Activated CD4-positive, alpha-beta memory T cell treated with anti-CD3 and anti-CD28 coated beads for 36 hours (primary cell): ENCODE measurements at regions of chr9 and their contacts with region 1.

Region 1: GRCh38 chr9:77456829-77457437 is 191.2 kb downstream of the GNA14 start:
- DNase-seq: peak; percentile 91
- H3K4me3 Mint-ChIP-seq: no peak overlapping the region
- H3K27ac Mint-ChIP-seq: no peak overlapping the region
- H3K4me1 Mint-ChIP-seq: peaks cover 13% of the 10 kb centered on the region
- H3K27me3 Mint-ChIP-seq: no peaks in the 10 kb centered on the region

Region 2: GRCh38 chr9:77163884-77164283 is 293.0 kb before region 1 on chr9:
- CTCF ChIA-PET with region 1: interaction called, 18 read pairs
- POLR2A ChIA-PET with region 1: no interaction called
- intact Hi-C with region 1: no loop called
- DNase-seq: no peak
- H3K4me3 Mint-ChIP-seq: no peak overlapping the region
- H3K27ac Mint-ChIP-seq: no peak overlapping the region
- H3K4me1 Mint-ChIP-seq: no peaks in the 10 kb centered on the region
- H3K27me3 Mint-ChIP-seq: peaks cover 8% of the 10 kb centered on the region

Region 3: DNA sequence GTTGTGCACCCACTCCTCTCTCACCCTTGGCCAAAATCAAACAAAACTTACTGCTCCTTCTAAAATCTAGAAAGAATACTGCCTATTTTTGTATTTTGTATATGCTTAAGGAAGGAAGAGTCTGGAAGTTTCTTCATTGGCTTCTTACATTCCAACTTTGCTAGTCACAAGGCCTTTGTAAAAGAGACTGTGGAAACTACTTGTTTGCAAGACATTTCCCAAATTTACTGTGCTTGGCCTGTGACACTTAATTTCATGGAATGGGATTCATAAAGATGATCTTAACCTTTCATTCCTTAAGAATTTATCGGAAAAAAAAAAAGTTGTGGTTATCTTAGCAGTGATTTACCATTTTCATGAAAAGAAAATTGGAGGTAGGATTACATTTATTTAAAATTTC is 70.7 kb before region 1 on chr9:
- CTCF ChIA-PET with region 1: no interaction called
- POLR2A ChIA-PET with region 1: no interaction called
- intact Hi-C with region 1: no loop called
- DNase-seq: no peak
- H3K4me3 Mint-ChIP-seq: no peak overlapping the region
- H3K27ac Mint-ChIP-seq: no peak overlapping the region
- H3K4me1 Mint-ChIP-seq: peaks cover 2% of the 10 kb centered on the region
- H3K27me3 Mint-ChIP-seq: no peaks in the 10 kb centered on the region

Region 4: GRCh38 chr9:77433675-77434445 is 23.1 kb before region 1 on chr9:
- CTCF ChIA-PET with region 1: interaction called, 42 read pairs
- POLR2A ChIA-PET with region 1: no interaction called
- intact Hi-C with region 1: loop called (anchors 1 kb)
- DNase-seq: peak; percentile 65
- H3K4me3 Mint-ChIP-seq: no peak overlapping the region
- H3K27ac Mint-ChIP-seq: no peak overlapping the region
- H3K4me1 Mint-ChIP-seq: peaks cover 3% of the 10 kb centered on the region
- H3K27me3 Mint-ChIP-seq: no peaks in the 10 kb centered on the region

Region 5: GRCh38 chr9:77475641-77476473 is 18.9 kb after region 1 on chr9:
- CTCF ChIA-PET with region 1: interaction called, 37 read pairs
- POLR2A ChIA-PET with region 1: interaction called, 3 read pairs
- intact Hi-C with region 1: loop called (anchors 1 kb)
- DNase-seq: peak; percentile 85
- H3K4me3 Mint-ChIP-seq: no peak overlapping the region
- H3K27ac Mint-ChIP-seq: peak overlapping the region; percentile 91
- H3K4me1 Mint-ChIP-seq: peaks cover 30% of the 10 kb centered on the region
- H3K27me3 Mint-ChIP-seq: no peaks in the 10 kb centered on the region

Region 6: DNA sequence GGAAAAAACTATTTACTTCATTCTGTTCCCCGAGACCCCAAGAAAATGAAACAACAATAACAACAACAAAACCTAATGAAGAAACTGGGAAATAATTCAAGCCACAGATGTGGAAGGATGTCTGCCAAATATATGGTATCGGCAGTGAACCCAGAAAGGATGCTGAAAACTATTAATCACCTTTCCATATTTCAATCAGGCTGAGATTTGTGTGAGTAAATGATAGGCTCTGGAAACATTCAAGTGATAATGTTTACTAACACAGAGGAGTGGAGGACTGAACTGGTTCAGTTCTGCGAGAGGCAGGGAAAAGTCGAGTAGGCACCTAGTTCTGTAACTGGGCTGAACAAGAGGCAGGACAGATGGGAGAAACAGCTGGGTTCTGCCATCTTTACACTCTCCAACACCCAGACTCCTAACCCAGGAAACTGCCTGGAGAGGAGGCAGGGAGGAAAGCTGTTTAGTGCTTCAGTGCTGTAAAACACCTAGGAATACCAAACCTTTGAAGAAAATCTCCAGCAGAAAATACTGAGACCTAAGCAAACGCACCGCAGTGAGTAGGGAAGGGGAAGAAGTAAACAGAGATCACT is 288.0 kb after region 1 on chr9:
- CTCF ChIA-PET with region 1: interaction called, 38 read pairs
- POLR2A ChIA-PET with region 1: no interaction called
- intact Hi-C with region 1: no loop called
- DNase-seq: no peak
- H3K4me3 Mint-ChIP-seq: no peak overlapping the region
- H3K27ac Mint-ChIP-seq: peak overlapping the region; percentile 58
- H3K4me1 Mint-ChIP-seq: peaks cover 35% of the 10 kb centered on the region
- H3K27me3 Mint-ChIP-seq: no peaks in the 10 kb centered on the region

Region 7: GRCh38 chr9:78121488-78121887 is 664.6 kb after region 1 on chr9:
- CTCF ChIA-PET with region 1: interaction called, 17 read pairs
- POLR2A ChIA-PET with region 1: no interaction called
- intact Hi-C with region 1: loop called (anchors 1 kb)
- DNase-seq: peak; percentile 76
- H3K4me3 Mint-ChIP-seq: no peak overlapping the region
- H3K27ac Mint-ChIP-seq: no peak overlapping the region
- H3K4me1 Mint-ChIP-seq: peaks cover 41% of the 10 kb centered on the region
- H3K27me3 Mint-ChIP-seq: no peaks in the 10 kb centered on the region